ENCODE measurements at regions of chr16 and their contacts with region 1.

Region 1: DNA sequence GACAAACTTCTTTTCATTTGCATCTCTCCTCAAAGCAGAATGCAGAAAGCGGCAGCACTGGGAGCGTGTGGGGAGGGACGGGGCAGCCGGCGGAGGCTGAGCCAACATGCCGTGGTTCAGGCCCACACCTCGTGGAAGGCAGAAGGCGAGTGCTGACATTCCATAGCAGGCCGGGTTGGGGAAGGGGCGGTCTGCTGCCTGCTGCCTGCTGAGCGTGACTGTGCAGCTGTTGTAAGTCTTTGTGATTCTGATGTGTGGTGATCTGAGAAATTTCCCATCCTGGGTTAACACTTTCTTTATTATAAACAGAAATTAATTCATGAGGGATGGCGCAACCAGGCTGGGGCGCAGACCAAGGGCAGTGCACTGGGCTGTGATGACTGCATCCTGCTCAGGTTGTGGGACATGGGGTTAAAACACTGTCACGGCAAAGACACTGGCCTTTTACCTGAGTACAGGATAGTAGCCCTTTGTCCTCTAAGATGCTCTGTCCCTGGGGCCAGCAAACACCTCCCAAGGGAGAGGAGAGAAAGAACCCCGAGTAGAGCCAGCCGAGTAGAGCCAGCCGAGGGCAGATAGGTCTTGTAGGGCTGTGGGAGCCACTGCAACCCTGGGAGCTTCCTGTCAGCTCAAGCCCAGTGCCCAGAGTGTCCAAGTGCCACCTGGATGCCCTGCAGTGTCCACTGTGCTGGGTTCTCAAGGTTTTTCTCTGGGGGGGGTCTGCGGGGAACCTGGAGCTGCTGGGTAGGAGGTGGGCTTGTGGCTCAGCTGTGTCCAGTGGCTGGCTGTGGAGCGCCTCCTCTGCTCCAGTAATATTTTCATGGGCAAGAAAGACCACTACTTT is 8.8 kb upstream of the DNASE1 start:
- DNase-seq: no peak
- H3K4me3 ChIP-seq: 0 out of 2 replicates have a peak overlapping the region, but pooled peaks have one; percentile 0
- H3K27ac ChIP-seq: peak overlapping the region; percentile 51
- H3K4me1 ChIP-seq: peaks cover 49% of the 10 kb centered on the region
- H3K27me3 ChIP-seq: no peaks in the 10 kb centered on the region
- CTCF ChIP-seq: no peak

Region 2: GRCh38 chr16:3264137-3265036 is 381.3 kb before region 1 on chr16:
- CTCF ChIA-PET with region 1: no interaction called
- POLR2A ChIA-PET with region 1: no interaction called
- intact Hi-C with region 1: loop called (anchors 10 kb)
- DNase-seq: peak; percentile 95 to 99
- H3K4me3 ChIP-seq: peak overlapping the region; percentile 84
- H3K27ac ChIP-seq: peak overlapping the region; percentile 75
- H3K4me1 ChIP-seq: no peaks in the 10 kb centered on the region; the same call in 1 of the 2 replicates
- H3K27me3 ChIP-seq: no peaks in the 10 kb centered on the region
- CTCF ChIP-seq: no peak

Region 3: GRCh38 chr16:3520413-3520812 is 125.3 kb before region 1 on chr16:
- CTCF ChIA-PET with region 1: no interaction called
- POLR2A ChIA-PET with region 1: no interaction called
- intact Hi-C with region 1: loop called (anchors 10 kb)
- DNase-seq: no peak
- H3K4me3 ChIP-seq: no peak overlapping the region
- H3K27ac ChIP-seq: no peak overlapping the region
- H3K4me1 ChIP-seq: peaks cover 17% of the 10 kb centered on the region
- H3K27me3 ChIP-seq: no peaks in the 10 kb centered on the region
- CTCF ChIP-seq: no peak

Region 4: DNA sequence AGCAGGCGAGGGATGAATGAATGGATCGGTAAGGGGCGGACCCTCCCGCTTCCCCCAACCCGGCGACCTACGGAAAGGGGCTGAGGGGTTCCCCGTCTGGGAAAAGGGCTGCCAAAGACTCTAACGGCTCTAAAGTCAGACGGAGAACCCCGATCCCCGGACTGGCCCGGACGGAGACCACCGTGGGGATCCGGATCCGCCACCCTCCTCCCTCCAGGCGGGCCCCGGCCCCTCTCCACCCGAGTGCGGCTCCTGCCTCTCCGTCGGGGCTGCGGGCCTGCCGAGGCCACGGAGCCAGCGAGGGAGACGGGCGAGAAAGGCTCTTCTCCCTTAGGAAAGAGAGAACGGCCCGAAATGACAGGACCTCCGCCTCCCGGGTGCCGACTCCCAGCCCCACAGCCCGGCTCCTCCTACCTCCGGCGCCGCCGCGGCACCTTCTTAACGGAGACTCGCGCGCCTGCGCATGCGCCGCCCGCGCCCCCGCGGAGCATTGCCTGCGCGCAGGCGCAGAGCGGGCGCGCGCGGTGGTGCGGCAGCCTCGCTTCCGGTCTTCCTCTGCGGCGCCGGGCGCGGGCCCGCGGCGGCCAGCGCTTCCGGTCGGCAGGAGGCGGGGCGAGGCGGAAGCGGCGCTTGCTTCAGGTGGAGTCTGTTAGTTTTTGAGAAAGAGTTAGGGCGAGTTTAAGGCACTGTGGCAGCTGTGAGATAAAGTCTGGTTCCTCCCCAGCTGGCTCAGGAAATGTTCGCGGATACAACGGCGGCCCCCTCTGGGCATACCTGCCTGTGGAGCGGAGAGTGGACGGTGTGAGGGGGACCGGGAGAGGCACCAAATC is 34.4 kb before region 1 on chr16 and contains the start of gene SLX4:
- CTCF ChIA-PET with region 1: interaction called, 3 read pairs
- POLR2A ChIA-PET with region 1: interaction called, 4 read pairs
- intact Hi-C with region 1: loop called (anchors 2 kb)
- DNase-seq: peak; percentile 68 to 96
- H3K4me3 ChIP-seq: peak within 1 kb of the TSS; percentile 95
- H3K27ac ChIP-seq: peak within 1 kb of the TSS; percentile 19; the same call in 1 of the 2 replicates
- H3K4me1 ChIP-seq: peaks cover 13% of the 10 kb centered on the region
- H3K27me3 ChIP-seq: no peaks in the 10 kb centered on the region
- CTCF ChIP-seq: no peak
- total RNA-seq, gene SLX4: 11.5 and 13.8 TPM in 2 replicates

Region 5: DNA sequence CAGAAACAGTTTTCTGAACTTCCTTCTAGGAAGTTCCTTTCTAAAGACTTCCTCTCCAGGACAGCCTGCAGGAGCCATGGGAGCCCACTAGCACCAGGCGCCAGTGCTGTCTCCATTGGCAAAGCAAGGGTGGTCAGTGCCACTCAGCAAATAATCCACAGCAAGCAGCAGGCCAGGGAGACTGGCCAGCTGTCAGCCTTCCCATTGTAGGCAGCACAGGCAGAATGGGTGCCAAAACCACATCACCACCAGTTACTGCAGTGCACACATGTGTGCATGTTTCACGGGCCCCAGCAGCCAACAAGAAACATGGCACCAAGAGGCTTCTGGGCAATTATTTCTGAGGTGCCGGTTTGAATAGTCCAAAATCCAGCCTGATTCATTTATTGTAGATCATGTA is 35.5 kb after region 1 on chr16:
- CTCF ChIA-PET with region 1: no interaction called
- POLR2A ChIA-PET with region 1: no interaction called
- intact Hi-C with region 1: no loop called
- DNase-seq: no peak
- H3K4me3 ChIP-seq: no peak overlapping the region
- H3K27ac ChIP-seq: no peak overlapping the region
- H3K4me1 ChIP-seq: no peaks in the 10 kb centered on the region
- H3K27me3 ChIP-seq: no peaks in the 10 kb centered on the region
- CTCF ChIP-seq: no peak

Region 6: DNA sequence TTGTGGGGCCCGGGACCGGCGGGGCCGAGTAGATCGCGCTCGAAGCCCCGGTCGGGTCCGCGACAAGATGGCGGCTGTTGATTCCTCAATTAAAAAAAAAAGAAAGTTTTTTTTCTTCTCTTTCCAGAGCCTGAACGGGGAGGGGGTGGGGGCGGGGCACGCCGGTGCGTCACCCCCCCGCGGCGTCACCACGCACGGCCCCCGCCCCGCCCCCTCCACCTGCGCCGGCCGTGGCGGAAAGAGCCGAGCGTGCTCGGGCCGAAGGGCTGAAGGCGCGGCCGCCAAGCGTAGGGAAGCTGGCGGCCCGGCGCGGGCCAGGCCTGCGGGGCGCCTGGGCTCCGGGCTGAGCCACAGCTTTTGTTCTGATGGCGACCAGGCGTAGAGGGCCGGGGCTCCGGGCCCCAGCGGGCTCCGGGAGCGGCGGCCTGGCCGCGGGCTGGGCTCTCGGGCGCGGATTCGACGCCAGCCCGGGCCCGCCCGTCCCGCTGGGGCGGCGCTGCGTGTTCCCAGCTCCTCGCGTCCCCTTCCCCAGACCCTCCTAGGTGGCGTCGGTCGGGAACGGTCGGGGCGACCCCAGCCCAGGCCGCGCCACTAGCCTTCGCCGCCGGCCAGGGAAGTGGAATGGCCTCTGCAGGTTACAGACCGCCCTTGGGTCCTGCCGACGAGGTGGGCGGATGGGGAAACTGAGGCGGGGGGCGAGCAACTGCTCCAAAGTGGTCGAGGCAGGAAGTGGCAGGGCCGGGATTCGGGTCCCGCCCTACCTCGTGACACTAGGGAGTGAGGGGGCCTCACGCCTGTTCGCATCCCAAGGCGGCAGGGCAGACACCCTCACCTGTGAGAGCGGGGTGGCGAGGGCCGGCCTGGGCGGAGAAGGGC is 235.1 kb after region 1 on chr16 and contains the start of gene CREBBP:
- CTCF ChIA-PET with region 1: no interaction called
- POLR2A ChIA-PET with region 1: interaction called, 10 read pairs
- intact Hi-C with region 1: no loop called
- DNase-seq: peak; percentile 64 to 91
- H3K4me3 ChIP-seq: peak within 1 kb of the TSS; percentile 92
- H3K27ac ChIP-seq: peak within 1 kb of the TSS; percentile 26; the same call in 1 of the 2 replicates
- H3K4me1 ChIP-seq: peaks cover 17% of the 10 kb centered on the region
- H3K27me3 ChIP-seq: no peaks in the 10 kb centered on the region
- CTCF ChIP-seq: no peak
- total RNA-seq, gene CREBBP: 70.5 and 74.9 TPM in 2 replicates